ENCODE measurements at regions of chr5 and their contacts with region 1.

Region 1: GRCh38 chr5:72816311-72817145 is at the start of gene TNPO1:
- DNase-seq: peak; percentile 69 to 95
- H3K4me3 ChIP-seq: peak within 1 kb of the TSS; percentile 77 to 89
- H3K27ac ChIP-seq: peak within 1 kb of the TSS; percentile 98 to 99
- H3K4me1 ChIP-seq: peaks cover 0 to 14% of the 10 kb centered on the region in 2 donors
- H3K27me3 ChIP-seq: no peaks in the 10 kb centered on the region
- CTCF ChIP-seq: no peak
- total RNA-seq, gene TNPO1: 48.5 TPM

Region 2: DNA sequence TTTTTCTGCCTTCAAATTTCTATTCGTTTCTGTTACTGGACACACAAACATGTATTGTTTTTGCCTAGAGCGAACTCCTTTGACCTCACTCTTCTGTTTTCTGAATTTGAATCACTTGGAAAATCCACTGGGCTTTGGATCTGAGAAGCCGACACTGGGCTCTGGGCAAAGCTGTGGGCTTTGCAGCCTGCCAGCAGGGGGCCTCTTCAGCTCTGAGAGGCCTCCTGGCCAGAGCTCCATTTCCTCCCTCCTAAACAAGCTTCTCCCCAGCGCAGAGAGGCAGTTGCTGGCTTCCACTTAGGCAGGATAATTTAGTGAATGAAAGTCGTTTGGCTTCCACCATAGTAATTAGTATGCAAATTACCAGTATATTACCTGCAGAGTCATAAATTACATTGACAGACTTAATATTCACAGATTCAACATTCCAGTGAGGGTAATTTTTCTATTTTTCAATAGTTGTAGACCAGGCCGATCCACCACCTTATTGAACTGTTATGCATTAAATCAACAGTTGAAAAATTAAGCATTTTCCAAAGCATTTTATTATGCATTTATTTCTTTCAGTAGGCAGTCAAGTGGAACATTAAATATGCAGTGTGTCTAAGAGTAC is 205.3 kb before region 1 on chr5:
- intact Hi-C with region 1: loop called (anchors 1 kb)
- DNase-seq: peak in 1 of 2 donors; percentile 82
- H3K4me3 ChIP-seq: no peak overlapping the region
- H3K27ac ChIP-seq: no peak overlapping the region
- H3K4me1 ChIP-seq: no peaks in the 10 kb centered on the region
- H3K27me3 ChIP-seq: no peaks in the 10 kb centered on the region
- CTCF ChIP-seq: peak; percentile 67 to 90 (median 90)

Region 3: DNA sequence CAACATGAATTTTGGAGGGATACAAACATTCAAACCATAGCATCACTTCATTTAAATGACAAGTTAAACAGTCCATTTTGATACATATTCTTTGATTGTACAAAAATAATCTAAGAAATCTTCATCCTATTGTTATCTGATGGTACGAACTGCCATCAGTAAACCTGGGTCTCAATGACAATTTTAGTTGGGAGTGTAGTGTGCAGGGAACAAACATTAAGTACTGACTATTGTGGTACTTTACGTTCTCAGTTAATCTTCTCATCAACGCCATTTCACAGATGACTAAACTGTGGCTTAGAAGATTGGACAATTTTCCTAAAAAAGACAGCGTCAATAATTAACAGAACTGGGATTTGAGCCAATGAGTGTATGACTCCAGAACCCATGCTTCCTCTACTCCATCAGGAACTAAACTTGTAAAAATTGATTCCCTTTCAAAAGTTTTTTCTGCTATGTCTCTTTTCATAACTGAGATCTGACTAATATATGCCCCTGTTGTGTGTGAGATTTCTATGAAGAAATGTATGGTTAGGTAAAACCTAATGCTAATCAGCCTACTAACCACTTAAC is 21.1 kb after region 1 on chr5:
- intact Hi-C with region 1: loop called (anchors 2 kb)
- DNase-seq: no peak
- H3K4me3 ChIP-seq: no peak overlapping the region
- H3K27ac ChIP-seq: peak overlapping the region; percentile 58 to 71
- H3K4me1 ChIP-seq: peaks cover 16 to 28% of the 10 kb centered on the region in 2 donors
- H3K27me3 ChIP-seq: no peaks in the 10 kb centered on the region
- CTCF ChIP-seq: no peak

Region 4: DNA sequence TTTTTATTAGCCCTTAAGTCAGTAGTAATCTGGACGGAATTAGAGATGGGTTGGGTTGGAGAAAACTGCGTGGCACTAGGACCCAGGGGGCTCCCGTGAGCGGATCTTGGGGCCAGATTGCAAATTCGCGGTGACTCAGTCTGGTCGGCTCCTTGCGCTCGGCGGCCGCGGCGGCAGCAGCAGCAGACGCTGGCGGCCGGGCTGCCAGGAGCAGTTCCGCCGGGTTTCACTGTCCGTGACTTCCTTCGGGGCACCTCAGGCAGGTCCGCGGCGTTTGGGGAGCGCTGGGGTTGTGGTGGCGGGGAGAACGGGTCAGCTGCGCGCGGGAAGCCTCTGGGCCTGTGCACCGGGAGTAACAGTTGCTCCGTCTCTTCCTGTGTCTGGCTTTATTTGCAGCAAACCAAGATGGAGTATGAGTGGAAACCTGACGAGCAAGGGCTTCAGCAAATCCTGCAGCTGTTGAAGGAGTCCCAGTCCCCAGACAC is 31.5 kb after region 1 on chr5:
- intact Hi-C with region 1: loop called (anchors 1 kb)
- DNase-seq: peak; percentile 59 to 94
- H3K4me3 ChIP-seq: peak overlapping the region; percentile 89 to 97
- H3K27ac ChIP-seq: peak overlapping the region; percentile 90 to 94
- H3K4me1 ChIP-seq: peaks cover 8 to 41% of the 10 kb centered on the region in 2 donors
- H3K27me3 ChIP-seq: no peaks in the 10 kb centered on the region
- CTCF ChIP-seq: peak in 2 of 3 experiments; percentile 3 to 17